ENCODE measurements at regions of chr6 and their contacts with region 1.

Region 1: DNA sequence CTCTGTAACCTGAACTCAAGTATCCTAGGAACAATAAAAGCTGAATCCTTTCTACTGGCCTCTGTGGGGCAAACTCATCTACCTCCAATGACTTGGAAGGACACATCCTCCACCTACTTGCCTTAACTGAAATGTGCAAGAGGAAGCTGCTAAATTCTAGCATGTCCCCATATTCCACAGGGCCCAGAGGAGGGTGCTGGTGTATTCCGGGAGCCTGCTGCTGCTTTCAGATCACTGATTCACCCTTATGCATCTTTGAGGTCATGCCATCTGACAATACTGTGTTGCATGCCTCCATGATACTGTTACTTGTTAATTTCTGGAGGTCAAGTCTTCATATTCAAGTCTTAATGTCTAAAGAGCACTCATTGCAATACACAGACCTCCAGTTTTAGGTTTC is 40.3 kb downstream of the LYRM4 start:
- DNase-seq: no peak
- ATAC-seq: no peak

Region 2: DNA sequence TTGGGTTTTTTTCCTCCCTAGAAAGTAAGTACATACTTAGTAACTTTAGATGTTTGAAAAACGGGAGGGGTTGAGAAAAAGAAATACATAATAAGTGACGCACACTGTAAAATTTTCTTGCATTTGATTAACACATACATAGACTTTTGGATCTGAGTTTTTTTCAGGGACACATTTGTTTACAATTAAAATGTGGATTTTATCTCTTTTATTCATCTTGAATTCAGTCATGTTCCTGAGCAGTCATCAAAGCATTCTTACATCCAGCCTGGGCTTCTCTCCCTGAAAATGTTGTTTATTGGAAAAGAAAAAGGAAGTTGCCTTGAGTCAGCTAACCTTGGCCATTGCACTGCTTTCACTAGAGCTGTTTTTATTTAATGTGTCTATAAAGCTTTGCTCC is 207.9 kb before region 1 on chr6:
- intact Hi-C with region 1: no loop called
- DNase-seq: no peak
- ATAC-seq: no peak

Region 3: DNA sequence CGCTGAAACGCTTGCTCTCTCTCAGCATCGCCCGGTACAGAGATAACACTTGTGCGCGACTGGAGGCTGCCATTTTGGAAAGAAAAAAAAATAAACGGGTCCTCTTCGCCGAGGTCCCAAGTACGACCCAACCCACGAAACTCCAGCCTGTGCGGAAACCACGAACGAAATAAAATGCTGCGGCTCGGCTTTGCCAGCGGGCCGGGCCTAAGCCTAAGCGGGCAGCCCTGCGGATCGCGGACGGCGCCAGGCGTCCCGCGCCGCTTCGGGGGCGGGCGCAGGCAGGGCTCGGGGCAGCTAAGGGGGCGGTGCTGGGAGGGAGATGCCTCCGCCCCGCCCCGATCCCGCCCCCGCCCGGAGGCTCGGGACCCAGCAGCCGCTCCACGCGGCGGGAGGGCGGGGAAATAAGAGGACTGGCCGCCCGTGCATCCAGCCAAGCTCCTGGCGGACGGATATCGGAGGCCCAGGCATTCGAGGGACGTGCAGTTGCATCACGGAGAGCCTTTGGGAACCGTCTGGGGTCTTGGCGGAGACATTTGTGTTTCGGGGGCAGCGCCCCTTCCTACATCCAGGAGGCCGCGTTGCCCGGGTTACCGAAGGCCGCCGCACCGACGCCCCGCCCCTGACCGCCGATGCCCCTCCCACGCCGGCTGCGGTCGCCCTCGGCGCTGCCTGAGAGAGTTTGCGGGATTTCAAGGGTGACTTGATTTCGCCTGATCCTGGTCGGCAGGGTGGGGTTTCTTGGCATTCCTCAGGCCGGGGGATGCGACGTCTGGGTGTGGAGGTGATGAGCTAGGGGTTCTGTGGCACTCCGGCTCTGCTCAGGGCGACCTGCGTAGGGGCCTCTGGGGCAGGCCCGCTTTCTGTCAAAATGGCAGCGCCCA is 40.5 kb after region 1 on chr6 and contains the starts of genes FARS2 and LYRM4:
- intact Hi-C with region 1: loop called (anchors 5 kb)
- DNase-seq: peak; percentile 96
- ATAC-seq: peak; percentile 98
- total RNA-seq, gene FARS2: 20.5 TPM
- total RNA-seq, gene LYRM4: 23.3 TPM

Region 4: GRCh38 chr6:5333658-5334057 is 113.2 kb after region 1 on chr6:
- intact Hi-C with region 1: no loop called
- DNase-seq: no peak
- ATAC-seq: no peak

Measured in Right ventricle myocardium inferior (tissue), 1 donor.